Ascending aorta (tissue), 2 donors: ENCODE measurements at regions of chr11 and their contacts with region 1.

Region 1: GRCh38 chr11:65817835-65818742 is 15.7 kb upstream of the SNX32 start:
- DNase-seq: peak; percentile 45 to 95
- H3K4me3 ChIP-seq: peak overlapping the region; percentile 77 to 91
- H3K27ac ChIP-seq: peak overlapping the region in 1 of 2 donors; percentile 25
- H3K4me1 ChIP-seq: peaks cover 0 to 2% of the 10 kb centered on the region in 2 donors
- H3K27me3 ChIP-seq: no peaks in the 10 kb centered on the region
- CTCF ChIP-seq: peak; percentile 92 to 99 (median 96)

Region 2: GRCh38 chr11:65711785-65712632 is 106.1 kb before region 1 on chr11 and contains the start of gene KAT5:
- intact Hi-C with region 1: loop called (anchors 1 kb)
- DNase-seq: peak; percentile 96 to 99
- H3K4me3 ChIP-seq: peak within 1 kb of the TSS; percentile 72 to 94
- H3K27ac ChIP-seq: peak within 1 kb of the TSS; percentile 96 to 100
- H3K4me1 ChIP-seq: peaks cover 4 to 19% of the 10 kb centered on the region in 2 donors
- H3K27me3 ChIP-seq: no peaks in the 10 kb centered on the region
- CTCF ChIP-seq: peak; percentile 95 to 99 (median 98)
- total RNA-seq, gene KAT5: 31.0 TPM

Region 3: GRCh38 chr11:65720237-65720934 is 97.7 kb before region 1 on chr11 and contains the start of gene RNASEH2C:
- intact Hi-C with region 1: loop called (anchors 1 kb)
- DNase-seq: peak; percentile 28 to 90
- H3K4me3 ChIP-seq: peak within 1 kb of the TSS; percentile 65 to 84
- H3K27ac ChIP-seq: peak within 1 kb of the TSS; percentile 79 to 86
- H3K4me1 ChIP-seq: peaks cover 5 to 17% of the 10 kb centered on the region in 2 donors
- H3K27me3 ChIP-seq: no peaks in the 10 kb centered on the region
- CTCF ChIP-seq: peak in 1 of 3 experiments; percentile 8
- total RNA-seq, gene RNASEH2C: 155 TPM

Region 4: GRCh38 chr11:65779851-65780577 is 38.1 kb before region 1 on chr11:
- intact Hi-C with region 1: loop called (anchors 2 kb)
- DNase-seq: peak in 1 of 2 donors; percentile 84
- H3K4me3 ChIP-seq: peak overlapping the region; percentile 75 to 94
- H3K27ac ChIP-seq: peak overlapping the region; percentile 66 to 76
- H3K4me1 ChIP-seq: peaks cover 2 to 9% of the 10 kb centered on the region in 2 donors
- H3K27me3 ChIP-seq: no peaks in the 10 kb centered on the region
- CTCF ChIP-seq: peak; percentile 91 to 98 (median 95)

Region 5: GRCh38 chr11:65833297-65834030 is 15.4 kb after region 1 on chr11 and contains the start of gene SNX32:
- intact Hi-C with region 1: loop called (anchors 1 kb)
- DNase-seq: peak; percentile 80 to 97
- H3K4me3 ChIP-seq: peak within 1 kb of the TSS; percentile 70 to 74
- H3K27ac ChIP-seq: no peak within 1 kb of the TSS
- H3K4me1 ChIP-seq: peaks cover 5 to 14% of the 10 kb centered on the region in 2 donors
- H3K27me3 ChIP-seq: no peaks in the 10 kb centered on the region
- CTCF ChIP-seq: no peak
- total RNA-seq, gene SNX32: not detected